ENCODE measurements at regions of chr7 and their contacts with region 1.

Region 1: GRCh38 chr7:148303295-148304082 is 287.1 kb upstream of the C7orf33 start:
- DNase-seq: no peak
- ATAC-seq: peak; percentile 40
- H3K4me3 Mint-ChIP-seq: peak overlapping the region; percentile 70
- H3K27ac Mint-ChIP-seq: peak overlapping the region; percentile 93
- H3K4me1 Mint-ChIP-seq: peaks cover 73% of the 10 kb centered on the region
- H3K27me3 Mint-ChIP-seq: no peaks in the 10 kb centered on the region
- CTCF ChIP-seq: no peak

Region 2: GRCh38 chr7:148289630-148290029 is 13.9 kb before region 1 on chr7:
- CTCF ChIA-PET with region 1: interaction called, 4 read pairs
- POLR2A ChIA-PET with region 1: interaction called, 5 read pairs
- intact Hi-C with region 1: loop called (anchors 2 kb)
- DNase-seq: no peak
- ATAC-seq: peak; percentile 64
- H3K4me3 Mint-ChIP-seq: no peak overlapping the region
- H3K27ac Mint-ChIP-seq: no peak overlapping the region
- H3K4me1 Mint-ChIP-seq: peaks cover 53% of the 10 kb centered on the region
- H3K27me3 Mint-ChIP-seq: no peaks in the 10 kb centered on the region
- CTCF ChIP-seq: no peak

Region 3: DNA sequence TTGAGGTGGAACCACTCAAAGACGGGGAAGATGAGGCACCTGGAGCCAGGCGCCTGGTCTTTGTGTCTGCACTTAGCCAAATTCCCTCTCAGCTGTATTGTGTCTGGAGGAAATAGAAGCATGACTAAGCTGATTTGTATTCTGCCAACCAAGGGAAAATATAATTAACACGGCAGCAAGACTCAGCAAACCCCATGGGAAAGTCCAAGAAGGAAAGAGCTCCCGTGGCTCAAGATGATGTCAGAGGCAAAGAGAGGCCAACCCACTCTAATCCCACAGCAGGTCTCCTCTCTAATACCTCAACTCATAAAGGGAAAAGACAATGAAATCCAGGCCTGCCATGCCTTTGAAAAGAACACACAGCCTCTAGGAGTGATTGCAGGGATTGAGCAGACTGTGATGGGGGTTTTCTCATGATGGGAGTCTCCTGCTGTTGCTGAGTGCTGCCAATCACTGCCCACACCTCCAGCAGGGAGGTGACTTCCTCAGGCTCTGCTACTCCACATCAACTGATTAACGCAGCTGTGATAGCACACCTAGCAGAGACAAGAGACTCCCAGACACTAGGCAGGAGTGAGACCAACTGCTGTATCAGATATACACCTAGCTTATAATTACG is 31.6 kb after region 1 on chr7:
- CTCF ChIA-PET with region 1: no interaction called
- POLR2A ChIA-PET with region 1: no interaction called
- intact Hi-C with region 1: loop called (anchors 5 kb)
- DNase-seq: no peak
- ATAC-seq: no peak
- H3K4me3 Mint-ChIP-seq: no peak overlapping the region
- H3K27ac Mint-ChIP-seq: no peak overlapping the region
- H3K4me1 Mint-ChIP-seq: peaks cover 17% of the 10 kb centered on the region
- H3K27me3 Mint-ChIP-seq: peaks cover 13% of the 10 kb centered on the region
- CTCF ChIP-seq: no peak